CD8-positive, alpha-beta T cell (primary cell): ENCODE measurements at regions of chr15 and their contacts with region 1.

Region 1: DNA sequence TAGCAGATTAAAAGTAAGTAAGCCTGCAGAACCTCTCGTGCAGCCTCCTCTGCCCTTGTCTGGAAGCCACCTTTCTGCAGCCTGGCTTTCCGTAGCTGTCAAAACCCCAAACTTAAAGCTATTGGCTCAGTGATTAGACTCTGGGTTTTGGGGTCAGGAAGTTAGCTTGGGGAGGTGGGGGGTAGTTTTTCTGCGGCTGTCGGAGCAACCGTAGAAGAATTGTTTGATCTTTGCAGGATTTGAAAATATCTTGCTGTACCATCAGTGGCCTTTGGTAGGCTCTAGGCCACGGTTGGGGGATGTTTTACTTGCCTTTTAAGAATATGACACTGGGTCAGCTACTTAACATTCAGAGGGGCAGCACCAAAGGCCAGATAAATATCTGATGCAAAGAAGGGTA is 88.4 kb upstream of the RASGRP1 start:
- DNase-seq: peak; percentile 62 to 96 (median 80)
- ATAC-seq: peak; percentile 77
- H3K4me3 ChIP-seq: no peak overlapping the region
- H3K4me3 Mint-ChIP-seq: peak overlapping the region; percentile 56
- H3K27ac ChIP-seq: peak overlapping the region; percentile 59 to 60
- H3K27ac Mint-ChIP-seq: peak overlapping the region; percentile 96
- H3K4me1 ChIP-seq: peaks cover 74% of the 10 kb centered on the region
- H3K4me1 Mint-ChIP-seq: peaks cover 75% of the 10 kb centered on the region
- H3K27me3 ChIP-seq: no peaks in the 10 kb centered on the region
- H3K27me3 Mint-ChIP-seq: no peaks in the 10 kb centered on the region
- CTCF ChIP-seq: no peak

Region 2: GRCh38 chr15:38283010-38283409 is 370.0 kb before region 1 on chr15:
- CTCF ChIA-PET with region 1: no interaction called
- POLR2A ChIA-PET with region 1: no interaction called
- intact Hi-C with region 1: no loop called
- DNase-seq: no peak
- ATAC-seq: no peak
- H3K4me3 ChIP-seq: no peak overlapping the region
- H3K4me3 Mint-ChIP-seq: no peak overlapping the region
- H3K27ac ChIP-seq: no peak overlapping the region
- H3K27ac Mint-ChIP-seq: no peak overlapping the region
- H3K4me1 ChIP-seq: no peaks in the 10 kb centered on the region
- H3K4me1 Mint-ChIP-seq: no peaks in the 10 kb centered on the region
- H3K27me3 ChIP-seq: no peaks in the 10 kb centered on the region
- H3K27me3 Mint-ChIP-seq: peaks cover 13% of the 10 kb centered on the region
- CTCF ChIP-seq: no peak

Region 3: GRCh38 chr15:38554354-38554753 is 98.6 kb before region 1 on chr15:
- CTCF ChIA-PET with region 1: interaction called, 396 read pairs
- POLR2A ChIA-PET with region 1: interaction called, 10 read pairs
- intact Hi-C with region 1: no loop called
- DNase-seq: peak in 3 of 9 experiments; percentile 34 to 72 (median 57)
- ATAC-seq: peak; percentile 60
- H3K4me3 ChIP-seq: no peak overlapping the region
- H3K4me3 Mint-ChIP-seq: peak overlapping the region; percentile 52
- H3K27ac ChIP-seq: peak overlapping the region in 1 of 2 experiments; percentile 71
- H3K27ac Mint-ChIP-seq: peak overlapping the region; percentile 91
- H3K4me1 ChIP-seq: peaks cover 92% of the 10 kb centered on the region
- H3K4me1 Mint-ChIP-seq: peaks cover 90% of the 10 kb centered on the region
- H3K27me3 ChIP-seq: no peaks in the 10 kb centered on the region
- H3K27me3 Mint-ChIP-seq: no peaks in the 10 kb centered on the region
- CTCF ChIP-seq: no peak

Region 4: GRCh38 chr15:38665586-38666305 is 12.7 kb after region 1 on chr15:
- CTCF ChIA-PET with region 1: interaction called, 103 read pairs
- POLR2A ChIA-PET with region 1: interaction called, 105 read pairs
- intact Hi-C with region 1: loop called (anchors 1 kb)
- DNase-seq: peak in 2 of 9 experiments; percentile 42 to 70
- ATAC-seq: peak; percentile 37
- H3K4me3 ChIP-seq: no peak overlapping the region
- H3K4me3 Mint-ChIP-seq: no peak overlapping the region
- H3K27ac ChIP-seq: no peak overlapping the region
- H3K27ac Mint-ChIP-seq: peak overlapping the region; percentile 66
- H3K4me1 ChIP-seq: peaks cover 72% of the 10 kb centered on the region
- H3K4me1 Mint-ChIP-seq: peaks cover 82% of the 10 kb centered on the region
- H3K27me3 ChIP-seq: no peaks in the 10 kb centered on the region
- H3K27me3 Mint-ChIP-seq: no peaks in the 10 kb centered on the region
- CTCF ChIP-seq: no peak

Region 5: DNA sequence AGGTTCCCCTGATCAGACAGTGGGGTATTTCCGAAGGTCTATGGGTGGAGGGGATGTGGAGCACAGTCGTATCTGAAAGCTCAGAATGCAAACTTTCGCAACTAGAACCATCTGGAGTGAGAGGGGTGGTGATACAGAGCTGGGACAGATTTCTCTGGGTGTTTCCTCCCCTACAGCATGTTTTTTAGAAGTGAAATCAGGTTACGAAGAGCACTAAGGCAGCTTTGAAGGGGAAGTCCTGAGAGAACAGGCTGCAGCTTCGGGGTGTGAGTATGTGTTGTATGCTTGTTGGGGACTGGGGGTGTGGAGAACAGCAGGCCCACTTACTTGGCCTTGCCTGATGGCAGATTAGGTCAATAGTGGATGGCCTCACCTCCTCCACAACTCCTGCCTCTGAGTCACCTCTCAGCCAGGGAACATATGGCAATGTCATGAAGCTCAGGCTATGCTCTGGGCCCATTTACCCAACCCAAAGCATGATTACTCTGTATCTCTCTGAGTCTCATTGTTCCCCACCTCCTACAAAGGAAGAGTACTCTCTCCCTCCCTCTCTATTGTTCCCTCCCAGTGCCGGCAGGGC is 18.8 kb after region 1 on chr15:
- CTCF ChIA-PET with region 1: interaction called, 103 read pairs
- POLR2A ChIA-PET with region 1: interaction called, 105 read pairs
- intact Hi-C with region 1: loop called (anchors 1 kb)
- DNase-seq: peak in 6 of 9 experiments; percentile 39 to 91 (median 64)
- ATAC-seq: peak; percentile 61
- H3K4me3 ChIP-seq: peak overlapping the region in 1 of 2 experiments; percentile 3
- H3K4me3 Mint-ChIP-seq: peak overlapping the region; percentile 61
- H3K27ac ChIP-seq: peak overlapping the region; percentile 70 to 84
- H3K27ac Mint-ChIP-seq: peak overlapping the region; percentile 97
- H3K4me1 ChIP-seq: peaks cover 77% of the 10 kb centered on the region
- H3K4me1 Mint-ChIP-seq: peaks cover 77% of the 10 kb centered on the region
- H3K27me3 ChIP-seq: no peaks in the 10 kb centered on the region
- H3K27me3 Mint-ChIP-seq: no peaks in the 10 kb centered on the region
- CTCF ChIP-seq: no peak